Activated CD8-positive, alpha-beta T cell treated with anti-CD3 and anti-CD28 coated beads, Interleukin-2, amount 10 ng/mL, durations not matched to agents 7 days and 5 days (primary cell): ENCODE measurements at regions of chr6 and their contacts with region 1.

Region 1: DNA sequence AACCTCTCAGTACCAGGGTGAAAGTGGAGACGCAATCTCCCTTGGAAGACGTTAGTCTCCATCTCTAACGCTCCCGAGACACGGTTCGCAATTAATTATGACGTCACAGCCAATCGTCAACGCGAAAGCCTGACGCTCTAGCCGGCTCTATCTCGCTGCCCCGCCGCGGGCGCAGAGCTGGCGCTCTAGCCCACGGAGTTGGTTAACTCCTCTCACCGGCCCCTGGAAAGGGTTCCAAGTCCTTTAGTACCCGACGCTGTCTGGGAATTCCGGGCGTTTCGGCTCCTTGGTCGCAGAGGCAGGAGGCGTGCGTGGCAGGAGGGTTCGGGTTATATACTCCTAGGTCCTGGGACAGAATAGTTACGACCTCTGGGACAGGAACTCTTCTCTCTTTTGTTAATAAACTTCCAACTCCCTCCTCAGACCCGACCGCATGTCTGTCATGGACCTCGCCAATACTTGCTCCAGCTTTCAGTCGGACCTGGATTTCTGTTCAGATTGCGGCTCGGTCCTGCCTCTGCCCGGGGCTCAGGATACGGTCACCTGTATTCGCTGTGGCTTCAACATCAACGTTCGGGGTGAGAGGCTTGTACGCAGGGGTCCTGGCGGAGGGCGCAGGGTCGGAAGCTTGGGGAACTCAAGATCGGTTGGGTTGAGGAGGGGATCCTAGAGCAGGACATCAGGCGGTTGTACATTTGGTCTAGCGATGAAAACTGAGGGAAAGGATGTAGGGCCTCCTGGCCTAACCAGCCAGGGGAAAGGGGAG is at the start of gene POLR1H:
- DNase-seq: peak; percentile 93
- ATAC-seq: peak; percentile 93
- H3K4me3 Mint-ChIP-seq: peak within 1 kb of the TSS; percentile 98
- H3K27ac Mint-ChIP-seq: peak within 1 kb of the TSS; percentile 99
- H3K4me1 Mint-ChIP-seq: peaks cover 48% of the 10 kb centered on the region
- H3K27me3 Mint-ChIP-seq: no peaks in the 10 kb centered on the region
- total RNA-seq, gene POLR1H: 52.3 to 60.4 TPM

Region 2: DNA sequence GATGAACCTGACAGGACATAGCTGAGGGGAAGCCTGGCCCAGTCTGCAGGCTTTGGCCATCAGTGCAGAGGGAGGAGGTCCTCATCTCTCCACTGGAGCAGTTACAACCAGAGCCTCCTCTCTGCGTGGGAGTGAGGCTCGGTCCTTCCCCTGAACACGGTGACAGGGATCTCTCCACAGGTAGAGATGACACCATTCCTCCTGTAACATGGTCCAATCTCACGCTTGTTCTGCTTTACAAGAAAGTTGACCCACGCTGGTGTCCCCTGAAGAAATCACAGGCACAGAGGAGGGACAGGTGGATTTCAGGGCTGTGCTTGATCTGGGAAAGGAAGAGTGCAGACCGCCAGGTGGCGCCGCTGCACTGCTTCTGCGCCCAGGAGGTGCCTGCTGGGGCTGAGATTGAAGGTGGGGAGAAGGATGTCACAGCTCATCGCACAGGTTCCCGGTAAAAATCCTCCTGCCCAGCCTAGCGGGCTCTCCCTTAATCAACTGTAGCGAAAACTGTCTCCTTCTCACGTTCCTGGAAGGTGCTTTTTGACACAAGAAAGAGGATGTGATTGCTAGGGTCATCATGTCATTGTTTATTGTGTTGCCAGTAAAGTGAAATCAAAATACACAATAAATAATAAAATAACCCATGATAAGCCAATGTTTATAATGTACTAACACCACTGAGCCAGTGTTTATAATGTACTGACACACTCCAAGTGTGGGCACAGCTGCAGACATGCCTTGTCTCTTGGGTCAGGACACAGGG is 213.2 kb before region 1 on chr6:
- CTCF ChIA-PET with region 1: interaction called, 13 read pairs
- POLR2A ChIA-PET with region 1: no interaction called
- DNase-seq: peak; percentile 87
- ATAC-seq: peak; percentile 90
- H3K4me3 Mint-ChIP-seq: no peak overlapping the region
- H3K27ac Mint-ChIP-seq: no peak overlapping the region
- H3K4me1 Mint-ChIP-seq: peaks cover 16% of the 10 kb centered on the region
- H3K27me3 Mint-ChIP-seq: peaks cover 58% of the 10 kb centered on the region

Region 3: DNA sequence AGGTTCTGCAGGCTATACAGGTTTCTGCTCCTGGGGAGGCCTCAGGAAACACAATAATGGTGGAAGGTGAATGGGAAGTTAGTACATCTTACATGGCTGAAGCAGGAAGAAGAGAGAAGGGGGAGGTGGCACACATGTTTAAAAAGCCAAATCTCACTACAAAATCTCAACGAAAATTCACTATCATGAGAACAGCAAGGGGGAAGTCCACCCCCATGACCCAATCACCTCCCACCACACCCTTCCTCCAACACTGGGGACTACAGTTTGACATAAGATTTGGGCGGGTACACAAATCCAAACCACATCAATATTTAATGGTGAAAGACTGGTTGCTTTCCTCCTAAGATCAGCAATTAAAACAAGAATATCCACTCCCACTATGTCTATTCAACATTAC is 14.1 kb before region 1 on chr6:
- CTCF ChIA-PET with region 1: no interaction called
- POLR2A ChIA-PET with region 1: interaction called, 10 read pairs
- DNase-seq: no peak
- ATAC-seq: no peak
- H3K4me3 Mint-ChIP-seq: no peak overlapping the region
- H3K27ac Mint-ChIP-seq: peak overlapping the region; percentile 78
- H3K4me1 Mint-ChIP-seq: peaks cover 18% of the 10 kb centered on the region
- H3K27me3 Mint-ChIP-seq: no peaks in the 10 kb centered on the region

Region 4: DNA sequence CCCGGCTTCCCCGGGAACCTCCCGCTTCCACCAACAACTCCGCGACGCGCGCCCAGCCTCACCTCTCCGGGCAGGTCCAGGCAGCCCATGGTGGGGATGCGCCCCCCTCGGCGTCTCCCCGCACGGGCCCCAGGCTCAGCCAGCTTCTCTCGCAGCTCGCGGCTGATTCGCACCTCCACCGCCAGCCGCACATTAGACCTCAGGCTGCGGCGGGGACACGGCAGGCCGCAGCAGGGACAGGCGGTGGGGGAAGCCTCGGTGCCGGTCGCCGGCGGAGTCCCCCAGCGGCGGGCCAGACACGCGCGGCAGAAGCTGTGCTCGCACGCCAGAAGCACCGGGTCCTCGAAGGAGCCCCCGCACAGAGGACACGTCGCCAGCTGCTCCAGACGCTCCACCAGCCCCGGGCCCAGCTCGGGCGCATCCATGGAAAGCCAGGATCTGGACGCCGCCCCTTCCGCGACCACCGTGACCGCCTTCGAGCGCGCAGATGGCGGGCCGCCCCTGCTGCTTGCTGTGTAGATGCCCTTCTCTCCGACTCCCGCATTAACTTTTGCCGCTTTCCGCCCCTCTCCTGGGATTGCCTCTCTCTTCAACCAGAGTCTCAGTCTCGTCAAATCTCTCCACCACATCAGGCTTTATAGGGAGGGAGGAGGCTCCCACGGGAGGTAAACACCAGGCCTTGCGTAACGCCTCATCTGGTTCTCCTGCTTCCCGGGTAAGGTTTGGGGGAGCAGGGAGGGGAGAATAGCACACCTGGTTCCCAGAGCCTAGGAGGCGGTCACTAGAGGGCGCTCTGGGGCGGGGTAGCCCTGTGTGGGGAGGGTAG is 14.1 kb after region 1 on chr6 and contains the start of gene RNF39:
- CTCF ChIA-PET with region 1: interaction called, 12 read pairs
- POLR2A ChIA-PET with region 1: interaction called, 16 read pairs
- DNase-seq: peak; percentile 32
- ATAC-seq: no peak
- H3K4me3 Mint-ChIP-seq: peak within 1 kb of the TSS; percentile 43
- H3K27ac Mint-ChIP-seq: no peak within 1 kb of the TSS
- H3K4me1 Mint-ChIP-seq: peaks cover 50% of the 10 kb centered on the region
- H3K27me3 Mint-ChIP-seq: peaks cover 78% of the 10 kb centered on the region
- total RNA-seq, gene RNF39: not detected

Region 5: GRCh38 chr6:30212865-30213666 is 151.8 kb after region 1 on chr6 and contains the start of gene TRIM26:
- CTCF ChIA-PET with region 1: no interaction called
- POLR2A ChIA-PET with region 1: interaction called, 17 read pairs
- DNase-seq: peak; percentile 98
- ATAC-seq: peak; percentile 90
- H3K4me3 Mint-ChIP-seq: peak within 1 kb of the TSS; percentile 90
- H3K27ac Mint-ChIP-seq: peak within 1 kb of the TSS; percentile 99
- H3K4me1 Mint-ChIP-seq: peaks cover 49% of the 10 kb centered on the region
- H3K27me3 Mint-ChIP-seq: peaks cover 3% of the 10 kb centered on the region
- total RNA-seq, gene TRIM26: 78.0 to 86.4 TPM